GM18951 (cell line): ENCODE measurements at regions of chr3 and their contacts with region 1.

Region 1: DNA sequence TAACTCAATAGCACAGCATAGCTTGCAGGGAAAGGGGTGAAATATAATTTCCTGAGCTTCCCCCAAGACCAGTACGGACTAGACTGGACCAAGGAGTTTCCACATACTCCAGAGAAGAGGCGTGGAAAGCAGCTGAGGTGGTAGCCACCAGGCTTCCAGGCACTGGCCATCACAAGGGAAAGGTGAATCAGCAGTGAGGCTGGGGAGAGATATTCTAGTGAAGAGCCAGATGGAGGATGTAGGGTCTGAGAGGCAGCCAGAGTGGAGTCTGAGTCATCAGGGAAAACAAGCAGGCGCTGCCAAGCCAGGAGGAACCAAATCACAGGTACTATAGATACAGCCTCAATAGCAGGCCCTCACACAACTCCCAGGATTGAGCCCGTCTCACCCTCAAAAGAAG is 9.6 kb upstream of the RASA2 start:
- POLR2A ChIP-seq: no peak

Region 2: DNA sequence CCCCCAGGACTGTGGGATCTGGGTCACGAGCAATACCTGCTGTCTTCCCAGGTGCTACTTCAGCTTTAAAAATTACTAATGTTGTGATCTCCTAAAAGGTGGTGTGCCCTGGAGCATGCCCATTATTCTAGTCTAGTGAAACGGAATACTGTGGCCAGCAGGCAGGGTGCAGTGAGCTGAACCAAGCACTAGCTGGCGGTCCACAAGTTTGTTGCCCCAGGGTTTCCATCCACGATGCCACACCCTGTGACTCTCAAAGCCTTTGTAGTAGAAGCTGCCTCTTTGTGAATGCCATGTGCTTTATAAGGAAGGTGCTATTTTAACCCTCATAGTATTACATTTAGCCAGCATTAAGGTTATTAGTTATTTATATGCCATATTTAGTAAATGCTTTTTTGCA is 196.5 kb before region 1 on chr3:
- in situ Hi-C with region 1: no loop called
- POLR2A ChIP-seq: no peak

Region 3: DNA sequence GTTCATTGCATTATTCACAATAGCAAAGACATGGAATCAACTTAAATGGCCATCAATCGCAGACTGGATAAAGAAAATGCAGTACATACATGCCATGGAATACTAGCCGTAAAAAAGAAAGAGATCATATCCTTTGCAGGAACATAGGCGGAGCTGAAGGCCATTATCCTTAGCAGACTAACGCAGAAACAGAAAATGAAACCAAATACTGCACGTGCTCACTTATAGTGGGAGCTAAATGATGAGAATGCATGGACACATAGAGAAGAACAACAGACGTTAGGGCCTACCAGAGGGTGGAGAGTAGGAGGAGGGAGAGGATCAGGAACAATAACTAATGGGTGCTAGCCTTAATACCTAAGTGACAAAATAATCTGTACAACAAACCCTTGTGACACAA is 67.5 kb after region 1 on chr3:
- in situ Hi-C with region 1: loop called (anchors 10 kb)
- POLR2A ChIP-seq: no peak